Naive thymus-derived CD4-positive, alpha-beta T cell (primary cell): ENCODE measurements at regions of chr1 and their contacts with region 1.

Region 1: DNA sequence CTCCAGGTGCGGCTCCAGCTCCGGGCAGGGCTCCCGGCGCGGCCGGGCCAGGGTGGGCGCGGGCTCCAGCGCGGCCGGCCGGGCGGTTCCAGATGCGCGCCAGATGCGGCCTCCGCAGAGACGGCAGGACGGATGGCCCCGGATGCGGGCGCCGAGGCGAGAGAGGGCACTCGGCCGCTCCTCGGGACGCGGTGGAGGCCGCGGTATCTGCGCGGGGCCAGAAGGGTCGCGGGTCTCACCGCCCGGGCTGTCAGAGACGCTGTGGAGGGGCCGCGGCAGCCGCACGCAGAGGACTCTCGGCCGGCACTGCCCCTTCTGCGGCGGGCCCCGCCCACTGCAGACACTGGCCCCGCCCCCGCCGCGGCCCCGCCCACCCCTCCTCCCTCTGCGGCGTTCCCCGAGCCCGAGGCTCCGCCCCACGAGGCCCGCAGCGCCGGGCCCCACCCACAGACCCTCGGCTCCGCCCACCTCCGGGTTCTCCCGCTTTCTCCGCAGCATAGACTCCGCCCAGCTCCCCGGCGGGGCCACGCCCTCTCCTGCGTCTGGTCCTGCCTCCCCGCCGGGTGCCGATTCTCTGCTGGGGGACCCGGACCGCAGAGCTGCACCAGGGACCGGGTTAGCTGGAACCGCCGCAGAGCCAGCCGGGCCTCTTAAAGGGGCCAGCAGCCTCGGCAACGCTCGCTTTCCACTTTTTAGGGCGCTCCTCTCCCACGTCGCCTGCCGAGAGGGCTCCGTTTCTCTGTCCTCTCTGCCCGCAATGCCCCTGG is at the start of gene IFFO2:
- DNase-seq: peak; percentile 95 to 100 (median 97)
- ATAC-seq: peak; percentile 90
- H3K4me3 ChIP-seq: peak within 1 kb of the TSS; percentile 66
- H3K4me3 Mint-ChIP-seq: peak within 1 kb of the TSS; percentile 89 to 96 (median 93)
- H3K27ac ChIP-seq: peak within 1 kb of the TSS; percentile 98
- H3K27ac Mint-ChIP-seq: peak within 1 kb of the TSS; percentile 37 to 99 (median 92)
- H3K4me1 ChIP-seq: peaks cover 51 to 52% of the 10 kb centered on the region in 2 donors
- H3K4me1 Mint-ChIP-seq: peaks cover 47 to 58% (median 52%) of the 10 kb centered on the region in 7 donors
- H3K27me3 ChIP-seq: no peaks in the 10 kb centered on the region
- H3K27me3 Mint-ChIP-seq: peaks cover 0 to 28% (median 0%) of the 10 kb centered on the region in 5 donors
- total RNA-seq, gene IFFO2: 20.5 to 57.1 (median 28.2) TPM

Region 2: GRCh38 chr1:17439250-17440073 is 1517.1 kb before region 1 on chr1 and contains the start of gene RCC2:
- CTCF ChIA-PET with region 1: no interaction called
- POLR2A ChIA-PET with region 1: no interaction called
- intact Hi-C with region 1: loop called in 1 of 2 experiments (anchors 5 kb)
- DNase-seq: peak; percentile 63 to 80 (median 74)
- ATAC-seq: peak; percentile 91
- H3K4me3 ChIP-seq: peak within 1 kb of the TSS; percentile 94
- H3K4me3 Mint-ChIP-seq: peak within 1 kb of the TSS; percentile 92 to 99 (median 96)
- H3K27ac ChIP-seq: peak within 1 kb of the TSS; percentile 86
- H3K27ac Mint-ChIP-seq: peak within 1 kb of the TSS; percentile 87 to 98 (median 96)
- H3K4me1 ChIP-seq: peaks cover 14 to 19% of the 10 kb centered on the region in 2 donors
- H3K4me1 Mint-ChIP-seq: peaks cover 17 to 54% (median 43%) of the 10 kb centered on the region in 7 donors
- H3K27me3 ChIP-seq: no peaks in the 10 kb centered on the region
- H3K27me3 Mint-ChIP-seq: no peaks in the 10 kb centered on the region
- total RNA-seq, gene RCC2: 42.1 to 130 (median 46.0) TPM

Region 3: DNA sequence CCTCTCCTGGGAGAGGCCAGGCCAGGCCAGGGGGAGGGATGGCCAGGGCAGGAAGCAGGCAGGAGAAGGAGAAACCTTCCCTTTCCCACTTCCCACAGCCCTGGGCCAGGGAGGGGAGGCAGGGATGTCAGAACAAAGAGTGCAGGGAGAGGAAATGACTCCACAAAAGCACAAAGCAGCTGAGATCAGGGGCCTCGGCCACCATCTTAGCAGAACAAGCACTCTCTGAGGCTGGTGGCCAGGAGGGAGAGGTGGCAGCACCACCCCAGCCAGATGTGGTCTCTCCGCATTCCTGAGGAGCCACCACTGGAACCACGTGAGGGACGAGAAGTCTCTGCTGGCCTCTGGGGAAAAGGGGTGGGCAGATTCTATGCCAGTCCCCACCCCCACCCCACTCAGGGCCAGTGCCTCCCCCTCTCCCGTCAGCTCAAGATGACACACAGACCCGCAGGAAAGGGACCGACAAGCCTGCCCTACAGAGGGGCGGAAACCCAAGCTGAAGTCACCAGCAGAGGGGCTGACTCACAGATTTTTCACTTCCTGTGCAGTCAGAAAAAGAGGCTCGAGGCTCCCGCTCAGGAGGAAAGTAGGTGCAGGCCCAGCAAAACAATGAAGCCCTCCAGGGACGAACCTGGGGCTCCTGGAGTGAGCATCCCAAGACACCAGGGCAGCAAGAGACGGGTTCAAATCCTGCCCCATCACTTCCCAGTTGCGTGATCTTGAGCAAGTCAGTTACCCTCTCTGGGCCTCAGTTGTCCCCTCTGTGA is 30.1 kb before region 1 on chr1:
- CTCF ChIA-PET with region 1: interaction called, 25 read pairs
- POLR2A ChIA-PET with region 1: interaction called, 181 read pairs
- intact Hi-C with region 1: loop called (anchors 1 kb)
- DNase-seq: peak; percentile 43 to 84 (median 73)
- ATAC-seq: peak; percentile 86
- H3K4me3 ChIP-seq: peak overlapping the region; percentile 84
- H3K4me3 Mint-ChIP-seq: peak overlapping the region; percentile 73 to 93 (median 83)
- H3K27ac ChIP-seq: peak overlapping the region; percentile 71
- H3K27ac Mint-ChIP-seq: peak overlapping the region; percentile 57 to 99 (median 95)
- H3K4me1 ChIP-seq: peaks cover 58 to 73% of the 10 kb centered on the region in 2 donors
- H3K4me1 Mint-ChIP-seq: peaks cover 34 to 90% (median 80%) of the 10 kb centered on the region in 7 donors
- H3K27me3 ChIP-seq: no peaks in the 10 kb centered on the region
- H3K27me3 Mint-ChIP-seq: no peaks in the 10 kb centered on the region

Region 4: GRCh38 chr1:19010995-19011844 is 54.7 kb after region 1 on chr1:
- CTCF ChIA-PET with region 1: no interaction called
- POLR2A ChIA-PET with region 1: interaction called, 3 read pairs
- intact Hi-C with region 1: loop called in 1 of 2 experiments (anchors 1 kb)
- DNase-seq: peak in 8 of 9 donors; percentile 10 to 73 (median 53)
- ATAC-seq: peak; percentile 87
- H3K4me3 ChIP-seq: peak overlapping the region; percentile 19
- H3K4me3 Mint-ChIP-seq: peak overlapping the region in 9 of 10 donors; percentile 34 to 72 (median 59)
- H3K27ac ChIP-seq: peak overlapping the region; percentile 14
- H3K27ac Mint-ChIP-seq: peak overlapping the region in 8 of 9 donors; percentile 40 to 81 (median 72)
- H3K4me1 ChIP-seq: peaks cover 8 to 13% of the 10 kb centered on the region in 2 donors
- H3K4me1 Mint-ChIP-seq: peaks cover 15 to 33% (median 29%) of the 10 kb centered on the region in 7 donors
- H3K27me3 ChIP-seq: no peaks in the 10 kb centered on the region
- H3K27me3 Mint-ChIP-seq: peaks cover 0 to 5% (median 0%) of the 10 kb centered on the region in 5 donors

Region 5: GRCh38 chr1:19074902-19075721 is 118.6 kb after region 1 on chr1:
- CTCF ChIA-PET with region 1: interaction called, 5 read pairs
- POLR2A ChIA-PET with region 1: interaction called, 25 read pairs
- intact Hi-C with region 1: loop called (anchors 1 kb)
- DNase-seq: peak in 1 of 9 donors; percentile 10
- ATAC-seq: peak; percentile 19
- H3K4me3 ChIP-seq: peak overlapping the region; percentile 41
- H3K4me3 Mint-ChIP-seq: peak overlapping the region; percentile 45 to 82 (median 72)
- H3K27ac ChIP-seq: peak overlapping the region; percentile 18
- H3K27ac Mint-ChIP-seq: peak overlapping the region; percentile 32 to 93 (median 76)
- H3K4me1 ChIP-seq: peaks cover 32 to 52% of the 10 kb centered on the region in 2 donors
- H3K4me1 Mint-ChIP-seq: peaks cover 30 to 69% (median 60%) of the 10 kb centered on the region in 7 donors
- H3K27me3 ChIP-seq: no peaks in the 10 kb centered on the region
- H3K27me3 Mint-ChIP-seq: no peaks in the 10 kb centered on the region

Region 6: DNA sequence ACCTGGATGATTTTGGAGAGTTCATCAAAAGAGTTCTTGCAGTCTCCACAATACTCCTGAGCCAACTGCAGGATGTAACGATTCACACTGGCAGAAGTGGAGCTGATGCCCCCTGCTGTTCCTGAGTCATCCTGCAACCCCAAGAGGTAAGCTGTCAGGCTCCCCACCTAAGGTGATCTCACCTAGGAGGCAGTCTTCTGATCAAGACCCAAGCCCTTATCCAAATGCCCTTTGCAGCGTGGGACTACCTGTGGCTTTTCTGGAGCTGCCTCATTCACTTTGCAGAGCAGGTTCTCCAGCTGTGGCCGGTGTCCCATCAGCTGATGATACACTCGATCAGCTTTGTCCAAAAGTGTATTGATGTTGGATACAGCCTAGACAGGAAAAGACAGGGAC is 157.1 kb after region 1 on chr1:
- CTCF ChIA-PET with region 1: no interaction called
- POLR2A ChIA-PET with region 1: no interaction called
- intact Hi-C with region 1: loop called in 1 of 2 experiments (anchors 5 kb)
- DNase-seq: peak in 6 of 9 donors; percentile 10 to 40 (median 30)
- ATAC-seq: peak; percentile 61
- H3K4me3 ChIP-seq: no peak overlapping the region
- H3K4me3 Mint-ChIP-seq: no peak overlapping the region
- H3K27ac ChIP-seq: no peak overlapping the region
- H3K27ac Mint-ChIP-seq: no peak overlapping the region
- H3K4me1 ChIP-seq: no peaks in the 10 kb centered on the region
- H3K4me1 Mint-ChIP-seq: peaks cover 0 to 5% (median 0%) of the 10 kb centered on the region in 7 donors
- H3K27me3 ChIP-seq: no peaks in the 10 kb centered on the region
- H3K27me3 Mint-ChIP-seq: no peaks in the 10 kb centered on the region